Activated T-helper 2 cell treated with anti-CD3 and anti-CD28 coated beads, Interferon-gamma antibody, Interleukin-2, Interleukin-4, amounts not matched to agents 10 μg/mL and 5 μg/mL and 100 μg/mL, durations not matched to agents 14 hours and 24 hours and 36 hours (primary cell): ENCODE measurements at regions of chr17 and their contacts with region 1.

Region 1: DNA sequence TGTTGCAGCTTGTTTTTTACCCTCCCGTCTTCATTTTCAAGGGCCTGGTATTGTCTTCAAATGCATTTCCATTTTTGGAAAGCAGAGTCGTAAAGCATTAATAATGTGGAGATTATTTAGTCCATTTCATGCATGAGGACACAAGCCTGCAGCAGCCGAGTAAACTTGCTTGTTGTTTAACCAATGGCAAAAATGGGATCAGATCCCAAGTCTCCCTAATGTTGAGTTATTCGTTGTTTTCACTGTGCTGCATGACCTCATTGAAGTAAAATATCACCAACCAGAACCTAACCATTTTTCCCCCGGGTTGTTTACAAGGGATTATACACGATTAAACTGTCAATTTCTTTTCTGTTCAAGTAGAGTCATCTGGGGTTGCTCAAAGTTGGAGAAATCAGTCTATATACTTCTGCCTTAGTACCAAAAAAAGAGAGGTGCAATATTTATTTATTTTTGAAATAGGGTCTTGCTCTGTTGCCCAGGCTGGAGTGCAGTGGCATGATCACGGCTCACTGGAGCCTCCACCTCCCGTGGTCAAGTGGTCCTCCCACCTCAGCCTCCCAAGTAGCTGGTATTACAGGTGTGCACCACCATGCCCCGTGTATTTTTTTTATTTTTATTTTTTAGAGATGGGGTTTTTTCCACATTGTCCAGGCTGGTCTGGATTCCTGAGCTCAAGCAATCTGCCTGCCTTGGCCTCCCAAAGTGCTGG is 12.4 kb downstream of the AMZ2 start:
- DNase-seq: no peak
- H3K4me3 Mint-ChIP-seq: peak overlapping the region; percentile 77
- H3K27ac Mint-ChIP-seq: peak overlapping the region; percentile 93
- H3K4me1 Mint-ChIP-seq: peaks cover 67% of the 10 kb centered on the region
- H3K27me3 Mint-ChIP-seq: no peaks in the 10 kb centered on the region

Region 2: GRCh38 chr17:68238164-68238872 is 21.9 kb before region 1 on chr17:
- intact Hi-C with region 1: loop called (anchors 2 kb)
- DNase-seq: no peak
- H3K4me3 Mint-ChIP-seq: peak overlapping the region; percentile 75
- H3K27ac Mint-ChIP-seq: peak overlapping the region; percentile 95
- H3K4me1 Mint-ChIP-seq: peaks cover 63% of the 10 kb centered on the region
- H3K27me3 Mint-ChIP-seq: no peaks in the 10 kb centered on the region

Region 3: DNA sequence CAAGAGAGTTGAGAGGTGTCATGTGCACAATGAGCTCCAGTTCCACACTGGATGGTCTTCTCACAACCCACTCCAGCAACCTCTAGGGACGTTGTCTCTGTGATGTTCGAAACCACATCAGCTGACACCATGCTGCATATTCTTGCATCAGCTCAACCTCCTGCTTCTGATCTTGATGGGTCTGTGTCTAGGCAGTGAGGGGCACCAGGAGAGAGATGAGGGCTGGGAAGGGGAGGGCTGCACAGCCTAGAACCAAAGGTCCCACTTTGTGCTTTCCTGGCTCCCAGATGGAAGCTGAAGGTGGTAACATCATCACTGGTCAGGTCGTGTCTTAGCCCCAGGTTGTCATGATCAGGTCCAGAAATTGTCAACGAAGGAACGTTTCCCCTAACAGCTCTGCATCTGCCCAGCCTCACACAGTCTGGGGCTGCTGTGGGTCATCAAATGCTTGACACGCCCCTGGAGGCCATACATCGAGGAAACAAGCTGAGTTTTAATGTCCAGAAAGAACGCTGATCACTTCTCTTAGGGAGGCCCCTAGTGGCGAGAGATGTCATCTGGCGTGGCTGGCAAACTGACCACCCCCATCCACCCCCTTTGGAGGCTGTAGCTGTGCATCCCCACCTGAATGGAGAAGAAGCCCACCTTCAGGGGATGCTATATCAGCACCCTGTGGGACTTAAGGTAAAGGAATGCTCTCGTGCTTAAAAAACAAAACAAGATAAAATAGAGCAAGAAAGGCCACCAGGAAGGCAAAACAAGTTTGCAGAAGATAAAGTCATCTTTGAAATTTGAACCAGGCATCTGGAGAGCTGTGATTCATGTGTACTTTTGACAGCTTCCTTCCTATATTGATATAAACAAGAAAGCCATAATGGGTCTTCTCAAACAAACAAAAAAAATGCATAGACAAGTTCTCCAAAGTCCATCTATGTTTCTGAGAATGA is 138.8 kb after region 1 on chr17:
- intact Hi-C with region 1: loop called (anchors 1 kb)
- DNase-seq: peak; percentile 19
- H3K4me3 Mint-ChIP-seq: peak overlapping the region; percentile 39
- H3K27ac Mint-ChIP-seq: peak overlapping the region; percentile 84
- H3K4me1 Mint-ChIP-seq: peaks cover 31% of the 10 kb centered on the region
- H3K27me3 Mint-ChIP-seq: no peaks in the 10 kb centered on the region